Upper lobe of right lung (tissue), 1 donor: ENCODE measurements at regions of chr13 and their contacts with region 1.

Region 1: GRCh38 chr13:111066544-111066943 is 48.6 kb upstream of the ARHGEF7 start:
- DNase-seq: no peak
- ATAC-seq: no peak
- H3K4me3 ChIP-seq: peak overlapping the region; percentile 65
- H3K27ac ChIP-seq: peak overlapping the region; percentile 30
- H3K4me1 ChIP-seq: no peaks in the 10 kb centered on the region
- H3K27me3 ChIP-seq: no peaks in the 10 kb centered on the region
- CTCF ChIP-seq: no peak

Region 2: GRCh38 chr13:111219950-111220349 is 153.4 kb after region 1 on chr13:
- intact Hi-C with region 1: loop called (anchors 5 kb)
- DNase-seq: no peak
- ATAC-seq: peak; percentile 47
- H3K4me3 ChIP-seq: no peak overlapping the region
- H3K27ac ChIP-seq: peak overlapping the region; percentile 8
- H3K4me1 ChIP-seq: peaks cover 35% of the 10 kb centered on the region
- H3K27me3 ChIP-seq: no peaks in the 10 kb centered on the region
- CTCF ChIP-seq: no peak